Natural killer cell (primary cell): ENCODE measurements at regions of chr14 and their contacts with region 1.

Region 1: GRCh38 chr14:52824507-52824906 is 33.1 kb upstream of the GNPNAT1 start:
- DNase-seq: no peak
- ATAC-seq: no peak
- H3K4me3 ChIP-seq: no peak overlapping the region
- H3K4me3 Mint-ChIP-seq: no peak overlapping the region
- H3K27ac ChIP-seq: no peak overlapping the region
- H3K27ac Mint-ChIP-seq: no peak overlapping the region
- H3K4me1 ChIP-seq: no peaks in the 10 kb centered on the region
- H3K4me1 Mint-ChIP-seq: no peaks in the 10 kb centered on the region
- H3K27me3 ChIP-seq: no peaks in the 10 kb centered on the region
- H3K27me3 Mint-ChIP-seq: no peaks in the 10 kb centered on the region
- CTCF ChIP-seq: no peak

Region 2: GRCh38 chr14:53055003-53055402 is 230.5 kb after region 1 on chr14:
- intact Hi-C with region 1: loop called (anchors 2 kb)
- DNase-seq: peak in 1 of 2 donors; percentile 65
- ATAC-seq: peak; percentile 60 to 75 (median 73)
- H3K4me3 ChIP-seq: no peak overlapping the region
- H3K4me3 Mint-ChIP-seq: no peak overlapping the region
- H3K27ac ChIP-seq: no peak overlapping the region
- H3K27ac Mint-ChIP-seq: no peak overlapping the region
- H3K4me1 ChIP-seq: no peaks in the 10 kb centered on the region
- H3K4me1 Mint-ChIP-seq: peaks cover 0 to 4% of the 10 kb centered on the region in 2 donors
- H3K27me3 ChIP-seq: no peaks in the 10 kb centered on the region
- H3K27me3 Mint-ChIP-seq: no peaks in the 10 kb centered on the region
- CTCF ChIP-seq: peak; percentile 85